ENCODE measurements at regions of chr1 and their contacts with region 1.

Region 1: GRCh38 chr1:220733090-220733601 is 15.0 kb upstream of the MTARC2 start:
- DNase-seq: peak; percentile 98
- H3K4me3 Mint-ChIP-seq: peak overlapping the region; percentile 19
- H3K27ac Mint-ChIP-seq: peak overlapping the region; percentile 44
- H3K4me1 Mint-ChIP-seq: peaks cover 32% of the 10 kb centered on the region
- H3K27me3 Mint-ChIP-seq: no peaks in the 10 kb centered on the region
- CTCF ChIP-seq: peak; percentile 99

Region 2: GRCh38 chr1:220189750-220190347 is 543.3 kb before region 1 on chr1:
- CTCF ChIA-PET with region 1: interaction called, 18 read pairs
- POLR2A ChIA-PET with region 1: interaction called, 4 read pairs
- intact Hi-C with region 1: no loop called
- DNase-seq: peak; percentile 64
- H3K4me3 Mint-ChIP-seq: no peak overlapping the region
- H3K27ac Mint-ChIP-seq: no peak overlapping the region
- H3K4me1 Mint-ChIP-seq: no peaks in the 10 kb centered on the region
- H3K27me3 Mint-ChIP-seq: no peaks in the 10 kb centered on the region
- CTCF ChIP-seq: peak; percentile 66

Region 3: GRCh38 chr1:220272047-220272840 is 460.9 kb before region 1 on chr1 and contains the start of gene RAB3GAP2:
- CTCF ChIA-PET with region 1: interaction called, 124 read pairs
- POLR2A ChIA-PET with region 1: interaction called, 10 read pairs
- intact Hi-C with region 1: no loop called
- DNase-seq: peak; percentile 99
- H3K4me3 Mint-ChIP-seq: no peak within 1 kb of the TSS
- H3K27ac Mint-ChIP-seq: no peak within 1 kb of the TSS
- H3K4me1 Mint-ChIP-seq: peaks cover 11% of the 10 kb centered on the region
- H3K27me3 Mint-ChIP-seq: peaks cover 18% of the 10 kb centered on the region
- CTCF ChIP-seq: no peak
- total RNA-seq, gene RAB3GAP2: 93.3 and 97.6 TPM in 2 replicates

Region 4: GRCh38 chr1:220300442-220301121 is 432.6 kb before region 1 on chr1:
- CTCF ChIA-PET with region 1: interaction called, 70 read pairs
- POLR2A ChIA-PET with region 1: interaction called, 16 read pairs
- intact Hi-C with region 1: loop called (anchors 1 kb)
- DNase-seq: peak; percentile 91
- H3K4me3 Mint-ChIP-seq: peak overlapping the region; percentile 25
- H3K27ac Mint-ChIP-seq: peak overlapping the region; percentile 85
- H3K4me1 Mint-ChIP-seq: peaks cover 13% of the 10 kb centered on the region
- H3K27me3 Mint-ChIP-seq: no peaks in the 10 kb centered on the region
- CTCF ChIP-seq: no peak

Region 5: DNA sequence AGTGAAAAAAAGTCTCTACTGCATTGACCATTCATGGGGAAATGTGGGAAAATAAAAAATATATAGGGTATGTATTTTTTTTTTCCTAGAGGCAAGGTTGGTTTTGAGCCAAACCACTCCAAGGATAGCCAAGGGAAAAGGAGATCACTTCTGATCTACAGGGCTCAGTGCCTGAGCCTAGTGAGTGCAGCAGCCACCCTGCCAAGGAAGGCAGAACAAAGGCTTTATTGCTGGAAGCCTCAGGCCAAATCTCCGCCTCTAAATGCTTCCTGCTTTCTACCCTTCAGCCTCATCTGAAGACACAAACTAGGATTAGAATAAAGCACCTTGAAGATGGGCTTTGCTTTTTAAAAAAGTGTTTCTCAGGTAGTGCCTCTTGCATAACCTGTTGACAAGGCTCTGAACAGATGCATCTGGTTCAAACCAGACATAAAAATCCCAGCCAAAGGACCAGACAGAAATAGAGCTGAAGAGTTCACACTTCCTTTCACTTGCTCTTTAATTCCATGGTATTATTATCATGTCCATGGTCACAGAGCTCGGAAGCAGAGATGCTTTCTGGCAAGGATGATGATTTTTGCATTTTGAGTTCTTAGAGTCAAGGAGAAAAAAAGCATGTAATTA is 32.5 kb before region 1 on chr1:
- CTCF ChIA-PET with region 1: interaction called, 27 read pairs
- POLR2A ChIA-PET with region 1: no interaction called
- intact Hi-C with region 1: no loop called
- DNase-seq: peak; percentile 28
- H3K4me3 Mint-ChIP-seq: no peak overlapping the region
- H3K27ac Mint-ChIP-seq: no peak overlapping the region
- H3K4me1 Mint-ChIP-seq: no peaks in the 10 kb centered on the region
- H3K27me3 Mint-ChIP-seq: no peaks in the 10 kb centered on the region
- CTCF ChIP-seq: no peak

Region 6: DNA sequence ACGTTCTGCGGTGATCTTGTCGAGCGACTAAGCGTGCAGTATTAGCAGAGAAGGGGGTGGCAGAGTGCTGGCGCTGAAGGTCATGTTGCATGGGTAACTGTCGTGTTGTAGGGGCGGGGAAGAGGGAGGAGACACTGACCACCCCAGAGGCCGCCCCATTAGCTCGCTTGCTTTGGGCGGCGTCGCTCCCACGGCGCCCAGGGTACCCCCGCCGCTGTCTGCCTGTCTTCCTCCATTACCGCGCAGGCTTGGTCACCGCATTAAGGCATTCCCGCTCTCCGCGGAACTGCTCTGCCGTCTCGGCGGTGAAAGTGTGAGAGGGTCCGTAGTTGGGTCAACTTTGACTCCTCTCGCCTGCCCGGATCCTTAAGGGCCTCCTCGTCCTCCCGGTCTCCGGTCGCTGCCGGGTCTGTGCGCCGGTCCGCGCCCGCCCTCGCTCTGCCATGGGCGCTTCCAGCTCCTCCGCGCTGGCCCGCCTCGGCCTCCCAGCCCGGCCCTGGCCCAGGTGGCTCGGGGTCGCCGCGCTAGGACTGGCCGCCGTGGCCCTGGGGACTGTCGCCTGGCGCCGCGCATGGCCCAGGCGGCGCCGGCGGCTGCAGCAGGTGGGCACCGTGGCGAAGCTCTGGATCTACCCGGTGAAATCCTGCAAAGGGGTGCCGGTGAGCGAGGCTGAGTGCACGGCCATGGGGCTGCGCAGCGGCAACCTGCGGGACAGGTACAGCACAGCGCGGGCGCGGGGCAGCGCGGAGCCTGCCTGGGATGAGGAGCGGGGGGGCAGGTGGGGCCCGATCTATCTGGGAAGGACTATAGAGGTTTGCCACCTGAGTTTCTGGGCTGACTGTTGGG is 15.2 kb after region 1 on chr1 and contains the start of gene MTARC2:
- CTCF ChIA-PET with region 1: interaction called, 87 read pairs
- POLR2A ChIA-PET with region 1: interaction called, 29 read pairs
- intact Hi-C with region 1: no loop called
- DNase-seq: peak; percentile 77
- H3K4me3 Mint-ChIP-seq: peak within 1 kb of the TSS; percentile 71
- H3K27ac Mint-ChIP-seq: no peak within 1 kb of the TSS
- H3K4me1 Mint-ChIP-seq: no peaks in the 10 kb centered on the region
- H3K27me3 Mint-ChIP-seq: no peaks in the 10 kb centered on the region
- CTCF ChIP-seq: no peak
- total RNA-seq, gene MTARC2: 3.6 and 5.2 TPM in 2 replicates

Measured in MCF 10A (cell line).